Activated B cell treated with CpG ODN at 0.5 μM for 24 hours (primary cell): ENCODE measurements at regions of chr22 and their contacts with region 1.

Region 1: GRCh38 chr22:40094485-40094884 is 83.2 kb upstream of the TNRC6B start:
- DNase-seq: no peak
- ATAC-seq: no peak
- H3K4me3 Mint-ChIP-seq: peak overlapping the region; percentile 55
- H3K27ac Mint-ChIP-seq: peak overlapping the region; percentile 81
- H3K4me1 Mint-ChIP-seq: peaks cover 75% of the 10 kb centered on the region
- H3K27me3 Mint-ChIP-seq: no peaks in the 10 kb centered on the region
- CTCF ChIP-seq: no peak

Region 2: DNA sequence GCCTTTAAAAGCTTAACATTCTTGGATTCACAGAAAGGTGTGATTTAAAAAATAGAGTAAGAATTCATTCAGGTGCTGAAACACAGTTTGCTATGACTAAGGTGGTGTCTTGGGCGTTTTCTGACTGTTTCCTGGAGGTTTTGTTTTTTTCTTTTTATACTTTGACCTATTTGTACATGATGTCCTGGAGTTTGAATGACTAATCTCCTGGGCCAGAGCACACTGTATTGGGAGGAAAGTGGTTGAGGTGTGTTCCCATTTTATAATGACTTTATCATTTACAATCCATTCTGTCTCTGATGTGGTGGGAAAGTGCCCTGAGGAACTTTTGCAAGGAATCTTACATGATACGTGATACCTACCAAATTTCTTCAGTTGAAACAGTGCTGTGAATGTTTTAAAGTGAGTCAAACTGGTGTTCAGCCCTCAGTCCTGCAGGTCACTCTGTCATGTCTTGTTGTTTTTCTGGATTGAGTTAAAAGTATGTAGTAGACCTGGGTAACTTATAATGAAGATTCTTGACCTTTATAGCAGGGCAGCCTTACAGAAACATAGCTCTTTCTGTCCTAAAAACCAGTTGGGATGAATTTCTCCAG is 164.1 kb after region 1 on chr22:
- CTCF ChIA-PET with region 1: no interaction called
- POLR2A ChIA-PET with region 1: no interaction called
- intact Hi-C with region 1: no loop called
- DNase-seq: no peak
- ATAC-seq: no peak
- H3K4me3 Mint-ChIP-seq: no peak overlapping the region
- H3K27ac Mint-ChIP-seq: peak overlapping the region; percentile 66
- H3K4me1 Mint-ChIP-seq: peaks cover 13% of the 10 kb centered on the region
- H3K27me3 Mint-ChIP-seq: no peaks in the 10 kb centered on the region
- CTCF ChIP-seq: no peak

Region 3: DNA sequence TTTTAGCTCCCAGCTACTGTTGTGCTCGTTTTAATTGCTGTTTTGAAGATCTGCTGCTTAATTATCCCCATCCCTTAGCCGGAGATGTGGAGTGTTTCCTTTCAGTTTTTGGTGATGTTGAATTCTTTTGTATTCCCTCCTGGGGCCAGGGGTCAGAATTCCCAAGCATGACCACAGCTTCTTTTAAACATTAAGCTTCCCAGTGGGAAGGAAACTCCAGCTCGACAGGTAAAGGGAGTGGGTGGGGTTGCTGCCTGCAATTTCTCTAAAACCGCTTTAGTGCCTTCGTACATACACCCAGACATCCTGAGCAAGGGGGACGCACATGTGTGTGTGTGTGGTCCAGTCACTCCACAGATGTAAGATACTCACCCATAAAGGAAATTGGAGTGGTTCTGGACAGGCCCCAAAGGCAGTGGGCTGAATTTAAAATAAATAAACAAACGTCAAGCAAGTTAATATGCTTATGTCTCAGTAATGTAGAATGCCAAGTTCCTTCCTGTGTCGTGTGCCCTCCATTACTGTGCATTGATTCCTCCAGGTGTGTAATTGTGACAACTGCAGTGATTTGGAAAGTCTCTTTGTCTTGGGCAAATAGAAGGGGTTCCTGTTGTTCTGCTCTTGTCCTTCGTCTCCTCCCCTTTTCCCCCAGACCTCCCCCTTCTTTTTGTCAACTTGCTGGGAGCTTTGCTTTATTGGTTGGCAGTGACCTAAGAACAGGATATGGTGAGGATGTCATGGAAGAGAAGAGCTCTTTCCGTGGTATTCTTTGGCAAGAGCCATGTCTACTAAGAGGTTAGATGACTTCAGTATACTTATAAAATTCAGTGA is 232.6 kb after region 1 on chr22:
- CTCF ChIA-PET with region 1: no interaction called
- POLR2A ChIA-PET with region 1: no interaction called
- intact Hi-C with region 1: no loop called
- DNase-seq: no peak
- ATAC-seq: no peak
- H3K4me3 Mint-ChIP-seq: no peak overlapping the region
- H3K27ac Mint-ChIP-seq: no peak overlapping the region
- H3K4me1 Mint-ChIP-seq: peaks cover 13% of the 10 kb centered on the region
- H3K27me3 Mint-ChIP-seq: no peaks in the 10 kb centered on the region
- CTCF ChIP-seq: no peak

Region 4: GRCh38 chr22:41437198-41437597 is 1342.7 kb after region 1 on chr22:
- CTCF ChIA-PET with region 1: no interaction called
- POLR2A ChIA-PET with region 1: interaction called, 10 read pairs
- intact Hi-C with region 1: no loop called
- DNase-seq: no peak
- ATAC-seq: no peak
- H3K4me3 Mint-ChIP-seq: no peak overlapping the region
- H3K27ac Mint-ChIP-seq: no peak overlapping the region
- H3K4me1 Mint-ChIP-seq: peaks cover 17% of the 10 kb centered on the region
- H3K27me3 Mint-ChIP-seq: no peaks in the 10 kb centered on the region
- CTCF ChIP-seq: no peak